ENCODE measurements at regions of chr2 and their contacts with region 1.

Region 1: DNA sequence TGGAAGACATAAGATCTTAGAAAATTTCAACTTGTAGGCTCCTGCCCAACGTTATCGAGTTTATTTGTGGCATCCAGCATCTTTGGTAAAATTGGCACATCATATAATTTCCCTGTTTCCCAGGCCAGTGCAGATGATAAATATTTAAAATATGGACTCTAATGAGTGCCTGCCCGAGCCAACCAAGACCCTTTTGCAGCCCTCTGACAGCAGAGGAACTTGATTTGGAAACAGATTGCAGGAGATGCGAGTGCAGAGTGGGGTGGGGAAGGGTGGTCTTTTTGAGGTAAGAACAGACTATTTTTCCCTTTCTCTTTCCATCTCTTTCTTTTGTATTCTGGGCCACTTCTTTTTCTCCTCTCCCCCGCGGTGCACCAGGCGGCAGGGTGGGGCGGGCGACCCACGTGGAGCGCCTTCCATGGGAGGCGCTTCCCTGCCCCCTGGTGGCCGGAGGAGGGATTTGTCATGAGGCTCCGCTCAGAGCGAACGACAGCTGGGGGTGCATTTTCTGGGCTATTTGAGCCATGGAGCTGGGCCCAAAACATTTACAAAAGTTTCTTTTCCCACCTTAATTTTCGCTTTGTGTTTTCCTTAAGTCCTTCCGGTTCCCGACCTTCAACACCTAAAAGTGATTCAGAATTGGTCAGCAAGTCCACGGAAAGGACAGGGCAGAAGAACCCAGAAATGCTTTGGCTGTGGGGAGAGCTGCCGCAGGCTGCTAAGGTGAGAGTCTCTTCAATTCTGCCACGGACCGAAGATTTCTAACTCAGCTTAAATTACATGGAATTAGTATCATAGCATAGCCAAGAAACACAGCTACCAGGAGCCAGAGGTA is 32.7 kb downstream of the LPIN1 start:
- DNase-seq: peak; percentile 79 to 92 (median 86)
- ATAC-seq: peak; percentile 96
- H3K4me3 ChIP-seq: peak overlapping the region; percentile 38
- H3K4me3 Mint-ChIP-seq: peak overlapping the region; percentile 62
- H3K27ac ChIP-seq: peak overlapping the region in 1 of 2 donors; percentile 8
- H3K27ac Mint-ChIP-seq: peak overlapping the region; percentile 64
- H3K4me1 ChIP-seq: peaks cover 38% of the 10 kb centered on the region
- H3K4me1 Mint-ChIP-seq: peaks cover 42% of the 10 kb centered on the region
- H3K27me3 ChIP-seq: no peaks in the 10 kb centered on the region
- H3K27me3 Mint-ChIP-seq: no peaks in the 10 kb centered on the region
- CTCF ChIP-seq: peak; percentile 97

Region 2: DNA sequence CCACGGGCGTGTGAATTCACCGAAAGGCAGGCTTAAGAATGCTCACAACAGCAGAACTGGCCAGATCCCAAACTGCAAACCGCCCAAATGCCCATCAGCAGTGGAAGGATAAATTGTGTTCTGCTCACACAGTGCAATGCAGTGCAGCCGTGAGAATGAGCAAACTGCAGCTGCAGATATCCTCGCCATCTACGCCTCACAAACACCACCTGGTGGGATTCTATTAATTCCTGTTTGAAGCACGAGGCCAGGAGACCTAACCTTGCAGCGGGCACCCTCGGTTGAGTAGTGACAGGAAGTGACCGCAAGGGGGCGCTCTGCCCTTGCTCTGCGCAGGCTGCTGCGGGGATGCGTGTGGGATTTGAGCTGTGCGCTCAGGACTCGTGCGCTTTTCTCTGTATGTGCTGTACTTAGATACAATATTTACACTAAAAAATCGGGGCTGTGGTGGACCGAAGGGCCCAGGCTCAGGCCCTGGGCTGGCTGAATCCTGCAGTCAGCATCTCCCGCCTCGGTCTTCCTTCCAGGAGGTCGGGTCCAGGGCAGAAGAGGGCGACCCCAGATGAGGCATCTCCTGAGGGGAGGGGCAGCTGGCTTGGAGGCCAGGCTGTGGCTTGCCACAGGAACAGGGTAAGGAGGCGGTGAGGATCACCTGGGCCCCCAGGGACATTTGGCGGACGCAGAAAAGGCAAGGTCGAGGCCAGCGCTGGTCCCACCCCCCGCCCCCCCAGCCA is 946.8 kb before region 1 on chr2:
- CTCF ChIA-PET with region 1: no interaction called
- POLR2A ChIA-PET with region 1: no interaction called
- intact Hi-C with region 1: loop called in 1 of 2 experiments (anchors 10 kb)
- DNase-seq: peak; percentile 69 to 91 (median 78)
- ATAC-seq: peak; percentile 93
- H3K4me3 ChIP-seq: no peak overlapping the region
- H3K4me3 Mint-ChIP-seq: peak overlapping the region; percentile 38
- H3K27ac ChIP-seq: no peak overlapping the region
- H3K27ac Mint-ChIP-seq: no peak overlapping the region
- H3K4me1 ChIP-seq: peaks cover 15% of the 10 kb centered on the region
- H3K4me1 Mint-ChIP-seq: peaks cover 7% of the 10 kb centered on the region
- H3K27me3 ChIP-seq: peaks cover 8 to 10% of the 10 kb centered on the region in 2 experiments
- H3K27me3 Mint-ChIP-seq: peaks cover 24% of the 10 kb centered on the region
- CTCF ChIP-seq: peak; percentile 99

Region 3: DNA sequence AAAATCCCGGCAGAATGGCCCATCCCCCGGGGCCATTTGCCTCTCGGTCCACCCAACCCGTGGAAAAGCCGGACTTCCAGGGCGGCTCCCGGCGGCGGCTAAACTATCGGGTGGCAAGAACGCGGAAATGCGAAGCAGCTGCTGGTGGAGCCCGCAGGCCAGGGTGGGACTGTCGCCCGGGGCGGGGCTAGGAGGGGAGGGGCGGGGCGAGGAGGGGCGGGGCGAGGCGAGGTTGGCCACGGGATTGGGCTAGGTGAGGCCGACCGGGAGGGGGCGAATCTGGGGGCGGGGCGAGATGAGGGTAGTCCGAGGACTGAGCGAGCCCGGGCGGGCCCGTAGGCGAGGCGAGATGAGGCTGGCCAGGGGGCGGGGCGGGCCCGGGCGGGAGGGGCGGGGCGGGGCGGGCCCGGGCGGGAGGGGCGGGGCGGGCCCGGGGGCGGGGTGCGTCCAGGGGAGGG is 624.2 kb before region 1 on chr2:
- CTCF ChIA-PET with region 1: no interaction called
- POLR2A ChIA-PET with region 1: no interaction called
- intact Hi-C with region 1: loop called in 1 of 2 experiments (anchors 10 kb)
- DNase-seq: peak; percentile 97 to 99 (median 99)
- ATAC-seq: peak; percentile 89
- H3K4me3 ChIP-seq: peak overlapping the region; percentile 60
- H3K4me3 Mint-ChIP-seq: peak overlapping the region; percentile 92
- H3K27ac ChIP-seq: peak overlapping the region; percentile 74 to 78
- H3K27ac Mint-ChIP-seq: peak overlapping the region; percentile 90
- H3K4me1 ChIP-seq: peaks cover 34% of the 10 kb centered on the region
- H3K4me1 Mint-ChIP-seq: peaks cover 24% of the 10 kb centered on the region
- H3K27me3 ChIP-seq: no peaks in the 10 kb centered on the region
- H3K27me3 Mint-ChIP-seq: no peaks in the 10 kb centered on the region
- CTCF ChIP-seq: no peak

Region 4: GRCh38 chr2:11477994-11478393 is 301.1 kb before region 1 on chr2:
- CTCF ChIA-PET with region 1: interaction called, 3 read pairs
- POLR2A ChIA-PET with region 1: no interaction called
- intact Hi-C with region 1: loop called (anchors 1 to 2 kb)
- DNase-seq: peak; percentile 67 to 87 (median 75)
- ATAC-seq: peak; percentile 59
- H3K4me3 ChIP-seq: no peak overlapping the region
- H3K4me3 Mint-ChIP-seq: no peak overlapping the region
- H3K27ac ChIP-seq: no peak overlapping the region
- H3K27ac Mint-ChIP-seq: no peak overlapping the region
- H3K4me1 ChIP-seq: peaks cover 9% of the 10 kb centered on the region
- H3K4me1 Mint-ChIP-seq: peaks cover under 1% of the 10 kb centered on the region
- H3K27me3 ChIP-seq: peaks cover 22 to 28% of the 10 kb centered on the region in 2 experiments
- H3K27me3 Mint-ChIP-seq: peaks cover 28% of the 10 kb centered on the region
- CTCF ChIP-seq: peak; percentile 97

Region 5: GRCh38 chr2:11688222-11689069 is 90.7 kb before region 1 on chr2:
- CTCF ChIA-PET with region 1: interaction called, 42 read pairs
- POLR2A ChIA-PET with region 1: interaction called, 4 read pairs
- intact Hi-C with region 1: loop called (anchors 1 kb)
- DNase-seq: peak; percentile 68 to 89 (median 76)
- ATAC-seq: peak; percentile 91
- H3K4me3 ChIP-seq: peak overlapping the region; percentile 1
- H3K4me3 Mint-ChIP-seq: no peak overlapping the region
- H3K27ac ChIP-seq: no peak overlapping the region
- H3K27ac Mint-ChIP-seq: no peak overlapping the region
- H3K4me1 ChIP-seq: peaks cover 10% of the 10 kb centered on the region
- H3K4me1 Mint-ChIP-seq: peaks cover 8% of the 10 kb centered on the region
- H3K27me3 ChIP-seq: no peaks in the 10 kb centered on the region
- H3K27me3 Mint-ChIP-seq: peaks cover 18% of the 10 kb centered on the region
- CTCF ChIP-seq: peak; percentile 85

Region 6: GRCh38 chr2:11738589-11739436 is 40.3 kb before region 1 on chr2:
- CTCF ChIA-PET with region 1: interaction called, 14 read pairs
- POLR2A ChIA-PET with region 1: interaction called, 4 read pairs
- intact Hi-C with region 1: loop called in 1 of 2 experiments (anchors 2 kb)
- DNase-seq: peak in 6 of 14 experiments; percentile 25 to 70 (median 48)
- ATAC-seq: peak; percentile 73
- H3K4me3 ChIP-seq: no peak overlapping the region
- H3K4me3 Mint-ChIP-seq: no peak overlapping the region
- H3K27ac ChIP-seq: no peak overlapping the region
- H3K27ac Mint-ChIP-seq: no peak overlapping the region
- H3K4me1 ChIP-seq: peaks cover 9% of the 10 kb centered on the region
- H3K4me1 Mint-ChIP-seq: peaks cover 8% of the 10 kb centered on the region
- H3K27me3 ChIP-seq: no peaks in the 10 kb centered on the region
- H3K27me3 Mint-ChIP-seq: peaks cover 8% of the 10 kb centered on the region
- CTCF ChIP-seq: no peak

Region 7: DNA sequence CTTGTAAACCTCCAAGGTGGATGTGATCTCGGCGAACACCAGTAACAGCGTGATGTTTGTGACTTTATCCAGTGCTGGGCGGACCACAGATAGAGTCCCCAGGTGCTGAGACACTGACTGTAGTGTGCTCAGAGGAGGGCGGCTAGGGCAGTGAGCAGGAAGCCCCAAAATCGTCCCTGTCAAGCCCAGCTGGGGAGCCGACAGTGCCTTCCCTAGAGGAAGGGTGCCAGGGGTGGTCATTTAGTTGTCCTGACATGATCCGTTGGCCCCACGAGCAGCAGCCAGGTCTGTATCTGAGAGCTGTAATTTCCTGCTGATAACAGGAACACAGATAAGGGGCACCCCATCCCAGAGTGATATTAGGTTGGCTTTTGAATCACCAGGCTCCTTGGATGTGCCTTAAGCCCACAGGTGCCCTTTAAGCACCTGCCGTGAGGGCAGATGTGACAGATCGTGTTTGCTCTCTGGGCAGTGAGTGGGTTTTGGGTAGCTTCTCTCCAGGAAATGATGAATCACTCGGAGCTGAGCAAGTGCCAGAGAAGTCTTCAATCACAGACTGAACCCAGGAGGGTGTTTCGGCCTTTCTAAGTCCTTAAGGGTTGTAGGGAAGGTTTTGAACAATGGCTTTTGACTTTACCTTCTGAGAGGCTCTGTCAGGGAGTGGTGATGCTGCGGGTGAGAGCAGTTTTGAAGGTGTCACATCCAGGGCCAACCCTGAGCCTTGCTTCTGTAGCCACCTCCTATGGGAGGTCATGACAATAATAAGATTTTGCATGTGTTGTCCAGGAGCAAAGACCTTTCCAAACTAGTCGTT is 25.0 kb before region 1 on chr2:
- CTCF ChIA-PET with region 1: interaction called, 5 read pairs
- POLR2A ChIA-PET with region 1: interaction called, 8 read pairs
- intact Hi-C with region 1: loop called in 1 of 2 experiments (anchors 1 kb)
- DNase-seq: peak; percentile 44 to 86 (median 60)
- ATAC-seq: peak; percentile 47
- H3K4me3 ChIP-seq: peak overlapping the region; percentile 37
- H3K4me3 Mint-ChIP-seq: peak overlapping the region; percentile 80
- H3K27ac ChIP-seq: peak overlapping the region; percentile 80 to 94
- H3K27ac Mint-ChIP-seq: peak overlapping the region; percentile 92
- H3K4me1 ChIP-seq: peaks cover 71% of the 10 kb centered on the region
- H3K4me1 Mint-ChIP-seq: peaks cover 86% of the 10 kb centered on the region
- H3K27me3 ChIP-seq: no peaks in the 10 kb centered on the region
- H3K27me3 Mint-ChIP-seq: no peaks in the 10 kb centered on the region
- CTCF ChIP-seq: no peak

Region 8: DNA sequence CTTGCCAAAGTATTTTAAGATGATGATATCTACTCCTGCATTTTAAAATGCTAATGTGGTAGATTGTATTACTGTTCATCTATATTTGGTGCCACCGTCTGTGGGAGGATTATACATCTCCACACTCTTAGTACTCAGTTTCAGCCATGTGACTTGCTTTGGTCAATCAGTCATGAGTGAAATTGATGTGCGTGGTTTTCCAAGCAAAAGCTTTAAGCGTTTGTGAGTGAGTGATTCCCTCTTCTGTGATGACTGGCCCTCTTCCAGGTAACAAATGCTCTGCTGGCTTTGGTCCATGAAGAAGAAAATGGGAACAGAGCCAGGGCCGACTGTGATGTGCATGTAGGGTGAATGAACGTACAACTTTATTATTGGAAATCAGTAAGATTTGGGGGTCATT is 297.7 kb after region 1 on chr2:
- CTCF ChIA-PET with region 1: no interaction called
- POLR2A ChIA-PET with region 1: no interaction called
- intact Hi-C with region 1: no loop called
- DNase-seq: no peak
- ATAC-seq: no peak
- H3K4me3 ChIP-seq: no peak overlapping the region
- H3K4me3 Mint-ChIP-seq: no peak overlapping the region
- H3K27ac ChIP-seq: no peak overlapping the region
- H3K27ac Mint-ChIP-seq: no peak overlapping the region
- H3K4me1 ChIP-seq: peaks cover 8% of the 10 kb centered on the region
- H3K4me1 Mint-ChIP-seq: peaks cover 16% of the 10 kb centered on the region
- H3K27me3 ChIP-seq: no peaks in the 10 kb centered on the region
- H3K27me3 Mint-ChIP-seq: no peaks in the 10 kb centered on the region
- CTCF ChIP-seq: no peak